ENCODE measurements at regions of chr20 and their contacts with region 1.

Region 1: DNA sequence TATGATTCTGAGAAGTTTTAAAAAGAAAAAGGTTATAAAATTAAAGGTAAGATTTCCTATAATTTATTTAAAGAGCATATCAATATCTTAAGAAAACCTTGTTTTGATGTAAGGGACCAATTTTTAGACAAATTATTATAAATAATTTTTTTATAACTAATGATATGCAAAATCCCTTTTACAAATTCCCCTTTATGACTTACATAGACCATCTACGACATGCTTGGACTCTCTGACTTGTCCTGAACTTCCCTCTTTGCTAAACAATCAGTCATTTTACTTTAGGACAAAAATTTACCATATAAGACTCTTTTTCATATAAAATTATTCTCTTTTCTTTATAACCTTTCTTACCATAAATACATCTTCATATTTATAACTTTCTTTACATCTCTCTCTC is 15.3 kb upstream of the ANGPT4 start:
- DNase-seq: no peak
- H3K4me3 ChIP-seq: no peak overlapping the region
- H3K27ac ChIP-seq: no peak overlapping the region
- H3K4me1 ChIP-seq: no peaks in the 10 kb centered on the region
- H3K27me3 ChIP-seq: no peaks in the 10 kb centered on the region
- CTCF ChIP-seq: no peak
- POLR2A ChIP-seq: no peak

Region 2: GRCh38 chr20:675453-676314 is 255.7 kb before region 1 on chr20 and contains the start of gene SCRT2:
- intact Hi-C with region 1: no loop called
- DNase-seq: peak in 1 of 2 donors; percentile 79
- H3K4me3 ChIP-seq: peak within 1 kb of the TSS in 1 of 3 donors; percentile 36
- H3K27ac ChIP-seq: no peak within 1 kb of the TSS
- H3K4me1 ChIP-seq: peaks cover 3 to 4% of the 10 kb centered on the region in 2 donors
- H3K27me3 ChIP-seq: peaks cover 3 to 86% of the 10 kb centered on the region in 2 donors
- CTCF ChIP-seq: no peak
- POLR2A ChIP-seq: no peak
- total RNA-seq, gene SCRT2: not detected

Region 3: GRCh38 chr20:916125-916799 is 15.1 kb before region 1 on chr20 and contains the start of gene ANGPT4:
- intact Hi-C with region 1: loop called (anchors 1 kb)
- DNase-seq: no peak
- H3K4me3 ChIP-seq: peak within 1 kb of the TSS in 2 of 3 donors; percentile 3 to 5
- H3K27ac ChIP-seq: no peak within 1 kb of the TSS
- H3K4me1 ChIP-seq: no peaks in the 10 kb centered on the region
- H3K27me3 ChIP-seq: peaks cover 0 to 12% of the 10 kb centered on the region in 2 donors
- CTCF ChIP-seq: no peak
- POLR2A ChIP-seq: no peak
- total RNA-seq, gene ANGPT4: 0.66 to 18.4 (median 1.0) TPM